SK-N-SH (cell line): ENCODE measurements at regions of chr17 and their contacts with region 1.

Region 1: DNA sequence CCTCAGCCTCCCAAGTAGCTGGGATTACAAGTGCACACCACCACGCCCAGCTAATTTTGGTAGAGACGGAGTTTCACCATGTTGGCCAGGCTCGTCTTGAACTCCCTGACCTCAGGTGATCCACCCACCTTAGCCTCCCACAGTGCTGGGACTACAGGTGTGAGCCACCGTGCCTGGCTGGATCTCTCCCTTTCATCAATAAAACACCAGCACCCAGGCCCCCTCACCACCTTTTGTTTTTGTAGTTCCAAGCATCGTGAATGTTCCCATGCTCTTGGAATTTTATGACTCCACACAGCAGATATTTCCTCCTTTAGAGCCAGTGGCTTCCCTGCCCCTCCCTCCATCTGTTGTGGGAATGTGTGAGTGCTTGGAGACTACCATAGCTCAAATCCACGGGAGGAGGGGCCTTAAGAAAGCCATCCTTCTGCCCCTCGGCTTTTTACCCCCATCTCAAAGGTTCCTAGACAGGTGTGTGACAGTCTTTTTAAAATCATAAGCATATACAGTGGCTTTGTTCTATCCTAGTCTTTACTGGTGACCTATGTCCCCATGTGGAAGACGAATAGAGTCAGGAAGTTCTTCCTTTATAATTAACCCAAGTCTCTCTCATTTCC is 47.1 kb downstream of the YPEL2 start:
- DNase-seq: no peak
- H3K4me3 ChIP-seq: no peak overlapping the region
- H3K27ac ChIP-seq: peak overlapping the region in 1 of 2 experiments; percentile 88; a peak in 2 of 4 replicates
- H3K4me1 ChIP-seq: peaks cover 15 to 22% of the 10 kb centered on the region in 2 experiments; a peak in 3 of 4 replicates
- H3K27me3 ChIP-seq: no peaks in the 10 kb centered on the region
- CTCF ChIP-seq: no peak
- EP300 ChIP-seq: peak in 1 of 2 experiments; percentile 38; a peak in 1 of 4 replicates
- RAD21 ChIP-seq: no peak

Region 2: GRCh38 chr17:59347975-59348391 is 30.6 kb before region 1 on chr17:
- CTCF ChIA-PET with region 1: no interaction called
- POLR2A ChIA-PET with region 1: no interaction called
- DNase-seq: no peak
- H3K4me3 ChIP-seq: no peak overlapping the region
- H3K27ac ChIP-seq: no peak overlapping the region
- H3K4me1 ChIP-seq: peaks cover 0 to 23% of the 10 kb centered on the region in 2 experiments; a peak in 1 of 4 replicates
- H3K27me3 ChIP-seq: no peaks in the 10 kb centered on the region
- CTCF ChIP-seq: no peak
- EP300 ChIP-seq: no peak
- RAD21 ChIP-seq: no peak

Region 3: GRCh38 chr17:59366773-59367657 is 11.6 kb before region 1 on chr17:
- CTCF ChIA-PET with region 1: interaction called, 15 read pairs
- POLR2A ChIA-PET with region 1: no interaction called
- DNase-seq: no peak
- H3K4me3 ChIP-seq: no peak overlapping the region
- H3K27ac ChIP-seq: peak overlapping the region; percentile 55 to 62
- H3K4me1 ChIP-seq: peaks cover 45 to 57% of the 10 kb centered on the region in 2 experiments
- H3K27me3 ChIP-seq: no peaks in the 10 kb centered on the region
- CTCF ChIP-seq: no peak
- EP300 ChIP-seq: peak in 1 of 2 experiments; percentile 27; a peak in 1 of 4 replicates
- RAD21 ChIP-seq: no peak; the same call in 1 of the 2 replicates

Region 4: GRCh38 chr17:60006124-60006523 is 627.6 kb after region 1 on chr17:
- CTCF ChIA-PET with region 1: no interaction called
- POLR2A ChIA-PET with region 1: no interaction called
- DNase-seq: peak; percentile 9
- H3K4me3 ChIP-seq: no peak overlapping the region
- H3K27ac ChIP-seq: no peak overlapping the region
- H3K4me1 ChIP-seq: no peaks in the 10 kb centered on the region
- H3K27me3 ChIP-seq: no peaks in the 10 kb centered on the region
- CTCF ChIP-seq: no peak
- EP300 ChIP-seq: no peak
- RAD21 ChIP-seq: no peak